Cardiac septum (tissue), 1 donor: ENCODE measurements at regions of chr2 and their contacts with region 1.

Region 1: GRCh38 chr2:106542811-106543259 is 55.7 kb downstream of the CD8B2 start:
- DNase-seq: no peak

Region 2: GRCh38 chr2:106104332-106105062 is 438.3 kb before region 1 on chr2:
- intact Hi-C with region 1: loop called (anchors 2 kb)
- DNase-seq: no peak

Region 3: GRCh38 chr2:106825161-106825560 is 282.3 kb after region 1 on chr2:
- intact Hi-C with region 1: no loop called
- DNase-seq: no peak